ENCODE measurements at regions of chr17 and their contacts with region 1.

Region 1: DNA sequence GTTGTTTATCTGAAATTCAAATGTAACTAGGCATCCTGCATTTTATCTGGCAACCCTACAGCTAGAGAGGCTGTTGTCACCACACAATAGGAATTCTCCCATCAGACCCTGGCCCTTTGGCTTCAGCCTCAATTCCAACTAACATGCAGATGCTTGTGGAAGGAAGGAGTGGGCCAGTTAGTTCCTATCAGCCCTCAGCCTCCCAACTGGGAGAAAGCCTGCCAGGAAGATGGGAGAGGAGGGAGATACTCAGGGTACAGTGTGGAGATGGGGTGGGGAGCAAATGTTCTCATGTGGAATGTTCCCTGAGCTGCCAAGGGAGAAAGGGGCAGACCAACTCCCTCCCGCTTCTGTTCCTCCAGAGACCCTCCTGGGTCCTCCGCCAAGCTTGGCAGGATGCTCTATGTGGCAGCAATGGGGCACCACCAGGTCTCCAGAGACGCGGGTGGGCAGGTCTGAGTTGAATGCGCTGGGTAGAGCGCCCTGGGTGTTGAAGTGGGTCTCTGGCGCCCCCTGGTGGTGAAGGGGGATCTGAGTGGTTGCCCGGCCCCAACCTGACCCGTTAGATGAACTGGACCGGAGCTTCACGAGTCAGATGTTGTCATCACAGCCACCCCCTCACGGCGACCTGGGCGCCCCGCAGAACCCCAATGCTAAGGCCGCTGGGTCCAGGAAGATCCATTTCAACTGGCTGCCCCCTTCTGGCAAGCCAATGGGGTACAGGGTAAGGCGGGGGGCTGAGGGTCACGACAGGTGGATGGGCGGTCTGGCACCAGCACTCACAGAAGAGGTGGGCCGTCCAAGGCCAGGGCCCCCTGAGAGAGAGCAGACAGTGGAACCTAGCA is 15.2 kb downstream of the GALK1 start:
- DNase-seq: peak; percentile 77 to 88
- H3K4me3 ChIP-seq: no peak overlapping the region
- H3K4me3 Mint-ChIP-seq: no peak overlapping the region
- H3K27ac Mint-ChIP-seq: no peak overlapping the region
- H3K4me1 ChIP-seq: peaks cover 4% of the 10 kb centered on the region; the same call in 1 of the 2 replicates
- H3K4me1 Mint-ChIP-seq: peaks cover 4% of the 10 kb centered on the region
- H3K27me3 ChIP-seq: no peaks in the 10 kb centered on the region
- H3K27me3 Mint-ChIP-seq: no peaks in the 10 kb centered on the region
- CTCF ChIP-seq: peak; percentile 86 to 97

Region 2: GRCh38 chr17:75632863-75633485 is 116.8 kb before region 1 on chr17 and contains the start of gene SMIM5:
- CTCF ChIA-PET with region 1: interaction called, 100 read pairs
- POLR2A ChIA-PET with region 1: no interaction called
- intact Hi-C with region 1: loop called (anchors 1 kb)
- DNase-seq: peak; percentile 86 to 91
- H3K4me3 ChIP-seq: no peak within 1 kb of the TSS
- H3K4me3 Mint-ChIP-seq: peak within 1 kb of the TSS; percentile 41
- H3K27ac Mint-ChIP-seq: peak within 1 kb of the TSS; percentile 70
- H3K4me1 ChIP-seq: peaks cover 19% of the 10 kb centered on the region
- H3K4me1 Mint-ChIP-seq: peaks cover 9% of the 10 kb centered on the region
- H3K27me3 ChIP-seq: no peaks in the 10 kb centered on the region
- H3K27me3 Mint-ChIP-seq: no peaks in the 10 kb centered on the region
- CTCF ChIP-seq: peak; percentile 95 to 98
- total RNA-seq, gene SMIM5: 0.20 TPM in 1 of 2 replicates, not detected in the other

Region 3: DNA sequence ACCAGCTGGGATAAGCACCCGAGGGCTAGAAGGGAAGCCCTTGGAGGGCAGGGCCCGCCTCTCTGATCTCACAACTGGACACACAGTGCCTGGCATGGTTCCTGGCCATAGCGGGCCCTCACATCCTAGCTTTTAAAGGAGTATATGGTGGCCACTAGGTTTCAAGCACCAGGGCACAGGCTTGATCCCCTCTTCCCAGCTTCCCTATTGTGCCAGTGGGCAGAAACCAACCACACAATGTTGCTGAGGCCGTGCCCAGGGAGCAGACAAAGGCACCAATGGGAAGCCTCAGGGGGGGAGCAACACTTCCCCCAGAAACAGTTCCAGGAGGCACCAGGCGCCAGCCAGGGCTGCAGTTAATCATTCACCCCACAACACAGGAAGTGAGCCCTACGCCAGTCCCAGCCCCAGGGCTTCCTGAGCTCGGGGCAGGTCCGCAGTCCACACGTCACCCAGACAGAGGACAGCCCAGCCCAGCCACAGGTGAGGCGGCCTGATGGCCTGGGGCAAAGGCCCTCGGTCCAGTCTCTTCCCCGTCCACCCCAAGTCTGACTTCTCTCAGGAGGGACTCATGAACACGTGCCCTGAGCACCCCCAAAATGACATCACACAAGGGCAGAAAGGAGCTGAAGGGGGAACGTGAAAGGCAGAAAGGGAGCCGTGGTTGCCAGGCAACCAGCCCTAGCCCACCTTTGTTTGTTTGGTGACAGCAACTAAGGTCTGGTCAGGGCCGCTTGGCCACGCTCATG is 103.7 kb before region 1 on chr17:
- CTCF ChIA-PET with region 1: interaction called, 14 read pairs
- POLR2A ChIA-PET with region 1: no interaction called
- intact Hi-C with region 1: no loop called
- DNase-seq: peak; percentile 96 to 97
- H3K4me3 ChIP-seq: 0 out of 2 replicates have a peak overlapping the region, but pooled peaks have one; percentile 5
- H3K4me3 Mint-ChIP-seq: peak overlapping the region; percentile 43
- H3K27ac Mint-ChIP-seq: peak overlapping the region; percentile 96
- H3K4me1 ChIP-seq: peaks cover 48% of the 10 kb centered on the region
- H3K4me1 Mint-ChIP-seq: peaks cover 23% of the 10 kb centered on the region
- H3K27me3 ChIP-seq: no peaks in the 10 kb centered on the region
- H3K27me3 Mint-ChIP-seq: no peaks in the 10 kb centered on the region
- CTCF ChIP-seq: peak in 1 of 2 experiments; percentile 2

Region 4: DNA sequence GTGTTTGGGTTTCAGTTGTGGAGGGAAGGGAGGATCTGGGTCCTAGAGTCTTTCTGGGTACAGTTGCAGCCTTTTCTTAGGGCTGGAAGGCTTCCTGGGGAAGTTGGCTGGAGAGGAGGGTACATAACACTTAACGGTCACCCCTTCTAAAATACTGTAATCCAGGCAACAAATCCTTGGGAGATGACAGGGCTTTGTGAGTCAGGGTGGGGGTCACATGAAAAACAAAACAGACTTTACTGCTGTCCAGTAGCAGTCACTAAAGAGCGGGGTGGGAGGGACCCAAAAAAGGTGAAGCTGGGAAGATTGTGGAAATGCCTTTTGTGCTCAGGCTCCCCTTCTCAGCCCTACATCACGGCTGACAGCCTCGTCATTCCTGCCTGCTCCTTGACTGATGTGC is 76.3 kb before region 1 on chr17:
- CTCF ChIA-PET with region 1: interaction called, 14 read pairs
- POLR2A ChIA-PET with region 1: interaction called, 6 read pairs
- intact Hi-C with region 1: loop called (anchors 1 kb)
- DNase-seq: no peak
- H3K4me3 ChIP-seq: no peak overlapping the region
- H3K4me3 Mint-ChIP-seq: no peak overlapping the region
- H3K27ac Mint-ChIP-seq: no peak overlapping the region
- H3K4me1 ChIP-seq: 0 out of 2 replicates have a peak, but pooled peaks cover under 1% of the 10 kb centered on the region
- H3K4me1 Mint-ChIP-seq: no peaks in the 10 kb centered on the region
- H3K27me3 ChIP-seq: no peaks in the 10 kb centered on the region
- H3K27me3 Mint-ChIP-seq: no peaks in the 10 kb centered on the region
- CTCF ChIP-seq: no peak

Region 5: GRCh38 chr17:75720725-75721462 is 28.9 kb before region 1 on chr17 and contains the start of gene ITGB4:
- CTCF ChIA-PET with region 1: interaction called, 24 read pairs
- POLR2A ChIA-PET with region 1: interaction called, 16 read pairs
- intact Hi-C with region 1: no loop called
- DNase-seq: peak; percentile 93 to 94
- H3K4me3 ChIP-seq: peak within 1 kb of the TSS; percentile 91
- H3K4me3 Mint-ChIP-seq: peak within 1 kb of the TSS; percentile 86
- H3K27ac Mint-ChIP-seq: peak within 1 kb of the TSS; percentile 85
- H3K4me1 ChIP-seq: peaks cover 25% of the 10 kb centered on the region
- H3K4me1 Mint-ChIP-seq: peaks cover 19% of the 10 kb centered on the region
- H3K27me3 ChIP-seq: no peaks in the 10 kb centered on the region
- H3K27me3 Mint-ChIP-seq: no peaks in the 10 kb centered on the region
- CTCF ChIP-seq: peak; percentile 18 to 24
- total RNA-seq, gene ITGB4: 50.8 and 55.4 TPM in 2 replicates

Region 6: GRCh38 chr17:75779231-75779986 is 29.6 kb after region 1 on chr17:
- CTCF ChIA-PET with region 1: interaction called, 16 read pairs
- POLR2A ChIA-PET with region 1: interaction called, 4 read pairs
- intact Hi-C with region 1: no loop called
- DNase-seq: peak; percentile 97 to 99
- H3K4me3 ChIP-seq: peak overlapping the region; percentile 85
- H3K4me3 Mint-ChIP-seq: peak overlapping the region; percentile 100
- H3K27ac Mint-ChIP-seq: peak overlapping the region; percentile 100
- H3K4me1 ChIP-seq: peaks cover 21% of the 10 kb centered on the region
- H3K4me1 Mint-ChIP-seq: peaks cover 28% of the 10 kb centered on the region
- H3K27me3 ChIP-seq: no peaks in the 10 kb centered on the region
- H3K27me3 Mint-ChIP-seq: peaks cover 4% of the 10 kb centered on the region
- CTCF ChIP-seq: no peak

Region 7: GRCh38 chr17:75845049-75845860 is 95.5 kb after region 1 on chr17:
- CTCF ChIA-PET with region 1: no interaction called
- POLR2A ChIA-PET with region 1: no interaction called
- intact Hi-C with region 1: no loop called
- DNase-seq: peak; percentile 85 to 89
- H3K4me3 ChIP-seq: no peak overlapping the region
- H3K4me3 Mint-ChIP-seq: peak overlapping the region; percentile 54
- H3K27ac Mint-ChIP-seq: peak overlapping the region; percentile 93
- H3K4me1 ChIP-seq: peaks cover 41% of the 10 kb centered on the region
- H3K4me1 Mint-ChIP-seq: peaks cover 26% of the 10 kb centered on the region
- H3K27me3 ChIP-seq: no peaks in the 10 kb centered on the region
- H3K27me3 Mint-ChIP-seq: no peaks in the 10 kb centered on the region
- CTCF ChIP-seq: peak; percentile 72 to 86

Measured in Caco-2 (cell line).